ENCODE measurements at regions of chr9 and their contacts with region 1.

Region 1: GRCh38 chr9:129172802-129173201 is 5.3 kb downstream of the IER5L start:
- DNase-seq: no peak
- ATAC-seq: no peak
- H3K4me3 ChIP-seq: no peak overlapping the region
- H3K27ac ChIP-seq: no peak overlapping the region
- H3K4me1 ChIP-seq: peaks cover 16% of the 10 kb centered on the region
- H3K27me3 ChIP-seq: no peaks in the 10 kb centered on the region
- CTCF ChIP-seq: no peak

Region 2: DNA sequence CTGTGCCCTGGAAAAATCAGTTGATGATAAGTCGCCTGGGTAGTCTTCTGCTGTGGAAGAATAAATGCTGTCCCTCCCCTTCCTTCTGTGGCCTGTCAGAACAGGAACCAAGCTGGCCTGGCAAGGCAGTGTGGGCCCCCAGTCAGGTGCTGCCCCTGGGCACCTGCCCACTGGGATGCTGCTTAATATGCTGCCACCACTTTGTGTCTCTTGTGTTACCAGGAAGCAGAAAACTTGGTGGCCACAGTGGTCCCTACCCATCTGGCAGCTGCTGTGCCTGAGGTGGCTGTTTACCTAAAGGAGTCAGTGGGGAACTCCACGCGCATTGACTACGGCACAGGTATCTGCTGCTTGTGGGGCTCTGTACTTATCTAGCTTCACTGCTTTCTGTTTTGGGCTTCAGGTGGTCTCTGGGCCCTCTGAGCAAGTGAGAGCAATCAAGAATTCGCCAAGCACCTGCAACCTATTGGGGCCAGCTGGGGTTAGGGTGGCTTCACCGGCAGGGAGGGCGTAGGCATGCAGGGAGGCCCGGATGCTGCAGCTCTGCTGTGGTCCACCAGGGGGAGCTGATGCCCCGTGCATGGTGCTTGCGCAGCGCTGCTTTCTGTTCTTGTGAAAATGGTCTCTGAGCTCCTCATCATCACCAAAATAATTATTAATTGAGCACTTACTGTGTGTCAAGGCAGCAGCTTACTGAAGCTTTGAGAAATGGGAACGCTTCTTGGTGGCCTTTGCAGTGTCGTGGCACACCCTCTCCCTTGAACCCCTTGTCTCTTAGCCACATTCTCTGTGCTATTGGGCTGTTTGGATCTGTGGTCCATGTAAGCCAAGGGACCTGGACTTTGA is 41.3 kb before region 1 on chr9:
- intact Hi-C with region 1: no loop called
- DNase-seq: peak; percentile 77 to 89
- ATAC-seq: peak; percentile 85 to 90 (median 88)
- H3K4me3 ChIP-seq: no peak overlapping the region
- H3K27ac ChIP-seq: no peak overlapping the region
- H3K4me1 ChIP-seq: peaks cover 7% of the 10 kb centered on the region
- H3K27me3 ChIP-seq: no peaks in the 10 kb centered on the region
- CTCF ChIP-seq: peak; percentile 97

Region 3: GRCh38 chr9:129148463-129149204 is 24.2 kb before region 1 on chr9:
- intact Hi-C with region 1: no loop called
- DNase-seq: no peak
- ATAC-seq: no peak
- H3K4me3 ChIP-seq: no peak overlapping the region
- H3K27ac ChIP-seq: peak overlapping the region; percentile 16
- H3K4me1 ChIP-seq: peaks cover 37% of the 10 kb centered on the region
- H3K27me3 ChIP-seq: no peaks in the 10 kb centered on the region
- CTCF ChIP-seq: no peak

Region 4: GRCh38 chr9:129270903-129271431 is 98.2 kb after region 1 on chr9:
- intact Hi-C with region 1: no loop called
- DNase-seq: peak in 1 of 2 donors; percentile 6
- ATAC-seq: no peak
- H3K4me3 ChIP-seq: no peak overlapping the region
- H3K27ac ChIP-seq: no peak overlapping the region
- H3K4me1 ChIP-seq: no peaks in the 10 kb centered on the region
- H3K27me3 ChIP-seq: peaks cover 0 to 5% (median 0%) of the 10 kb centered on the region in 3 donors
- CTCF ChIP-seq: no peak

Region 5: DNA sequence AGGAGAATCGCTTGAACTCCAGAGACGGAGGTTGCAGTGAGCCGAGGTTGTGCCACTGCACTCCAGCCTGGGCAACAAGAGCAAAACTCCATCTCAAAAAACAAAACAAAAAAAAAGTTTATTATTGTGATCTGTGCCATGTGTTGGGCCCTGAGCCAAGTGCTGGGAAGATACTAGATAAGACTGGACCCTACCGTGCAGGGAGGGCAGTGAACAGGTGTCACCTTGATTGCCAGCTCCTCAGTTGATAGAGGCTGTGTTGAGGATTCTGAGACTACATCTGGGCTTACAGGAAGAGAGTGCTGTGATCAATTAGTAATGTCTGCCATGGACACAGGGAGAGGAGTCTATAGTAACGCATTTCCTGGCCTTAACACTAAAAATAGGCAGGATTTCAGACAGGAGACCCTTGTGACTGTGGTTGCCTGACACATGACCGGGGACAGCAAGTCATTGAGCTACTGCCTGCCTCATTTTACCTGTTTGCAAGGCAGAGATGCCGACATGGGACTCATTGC is 246.6 kb after region 1 on chr9:
- intact Hi-C with region 1: loop called in 1 of 2 experiments (anchors 2 kb)
- DNase-seq: no peak
- ATAC-seq: no peak
- H3K4me3 ChIP-seq: no peak overlapping the region
- H3K27ac ChIP-seq: no peak overlapping the region
- H3K4me1 ChIP-seq: peaks cover 8% of the 10 kb centered on the region
- H3K27me3 ChIP-seq: no peaks in the 10 kb centered on the region
- CTCF ChIP-seq: no peak

Region 6: DNA sequence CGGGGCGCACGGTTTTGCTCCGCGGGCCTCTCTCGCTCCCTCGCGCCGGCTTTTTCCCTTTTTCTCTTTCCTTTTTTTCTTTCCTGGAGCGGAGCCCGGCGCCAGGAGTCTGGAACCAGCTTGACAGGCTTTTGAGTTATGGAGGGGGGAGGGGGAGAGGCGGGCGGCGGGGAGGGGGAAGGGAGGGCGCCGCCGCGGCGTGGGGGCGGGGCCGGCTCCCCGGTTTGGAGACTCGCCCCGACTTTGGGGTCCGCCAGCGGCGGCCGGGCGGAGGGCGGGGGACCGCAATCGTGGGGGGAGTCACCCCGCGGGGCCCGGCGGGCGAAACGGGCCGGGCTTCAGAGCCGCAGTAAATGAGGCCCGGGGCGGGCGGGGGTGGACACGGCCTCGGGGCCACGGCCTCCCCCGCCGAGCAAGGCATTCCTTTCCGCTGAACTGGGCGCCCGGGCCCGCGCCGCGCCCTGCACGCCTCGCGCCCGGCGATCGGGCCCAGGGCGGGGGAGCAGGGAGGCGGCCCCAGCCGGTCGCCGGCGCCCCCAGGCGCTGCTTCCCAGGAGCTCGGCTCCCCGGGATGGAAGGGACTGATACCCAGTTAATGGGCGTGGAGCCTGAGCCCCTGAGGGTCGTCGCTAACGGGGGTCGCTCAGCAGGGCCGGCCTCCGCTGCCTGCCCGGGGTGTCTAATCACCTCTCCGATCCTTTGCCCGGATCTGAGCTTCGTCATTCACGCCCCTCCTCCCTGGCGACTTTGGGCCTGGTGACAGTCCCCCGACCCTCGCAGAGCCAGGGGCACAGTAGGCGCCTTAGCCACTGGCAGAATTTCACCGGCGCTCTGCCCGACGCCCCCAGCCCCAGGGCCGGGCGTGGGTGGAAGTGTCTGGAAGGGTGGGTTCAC is 310.0 kb after region 1 on chr9:
- intact Hi-C with region 1: no loop called
- DNase-seq: peak; percentile 89 to 92
- ATAC-seq: peak; percentile 72 to 79 (median 76)
- H3K4me3 ChIP-seq: peak overlapping the region; percentile 74
- H3K27ac ChIP-seq: peak overlapping the region; percentile 100
- H3K4me1 ChIP-seq: peaks cover 30% of the 10 kb centered on the region
- H3K27me3 ChIP-seq: no peaks in the 10 kb centered on the region
- CTCF ChIP-seq: no peak